ENCODE measurements at regions of chr2 and their contacts with region 1.

Region 1: DNA sequence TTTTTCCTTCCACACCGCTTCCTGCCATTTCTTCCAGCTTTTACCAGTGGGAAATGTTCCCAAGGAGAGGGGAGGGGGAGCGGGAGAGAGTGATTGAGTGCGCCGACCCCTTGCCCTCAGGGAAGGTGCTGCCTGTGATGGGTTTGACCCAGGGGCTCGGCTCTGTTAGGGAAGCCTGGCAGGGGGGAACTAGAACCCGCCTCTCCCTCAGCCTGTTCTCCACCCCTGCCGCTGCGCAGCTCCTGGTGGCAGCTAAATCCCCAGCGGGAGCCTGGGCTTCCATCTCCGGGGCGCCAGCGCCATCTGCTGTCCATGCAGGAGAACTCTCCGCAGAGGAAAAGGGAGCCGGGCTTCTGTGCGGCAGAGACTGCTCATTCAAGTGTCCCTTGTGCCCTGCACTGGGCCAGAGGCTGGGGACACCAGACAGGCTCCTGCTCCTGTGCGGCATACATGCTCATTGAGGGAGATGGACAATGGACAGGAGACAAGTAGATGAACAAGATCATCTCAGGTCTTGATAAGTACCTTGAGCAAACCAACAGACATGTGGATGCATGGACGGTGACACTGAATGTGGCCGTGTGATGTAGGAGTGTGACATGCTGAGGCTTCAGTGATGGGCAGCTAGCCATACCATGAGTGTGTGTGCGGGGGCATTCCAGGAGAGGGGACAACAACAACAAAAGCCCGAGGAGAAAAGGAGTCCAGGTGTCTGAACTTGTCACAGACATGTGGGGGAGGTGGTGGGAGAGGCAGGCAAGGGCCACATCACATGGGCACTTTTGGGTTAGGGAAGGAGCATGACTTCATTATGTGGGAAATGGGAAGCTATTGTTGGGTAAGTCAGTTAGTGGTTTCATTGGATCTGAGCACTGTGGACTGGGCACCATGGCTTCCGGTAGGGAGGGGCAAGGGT is 13.3 kb downstream of the CHPF start:
- DNase-seq: peak; percentile 53 to 90 (median 78)
- ATAC-seq: peak; percentile 84 to 97 (median 88)
- H3K4me3 ChIP-seq: no peak overlapping the region
- H3K4me3 Mint-ChIP-seq: no peak overlapping the region
- H3K27ac ChIP-seq: no peak overlapping the region
- H3K27ac Mint-ChIP-seq: no peak overlapping the region
- H3K4me1 ChIP-seq: peaks cover 0 to 6% of the 10 kb centered on the region in 2 experiments
- H3K4me1 Mint-ChIP-seq: no peaks in the 10 kb centered on the region
- H3K27me3 ChIP-seq: peaks cover 0 to 85% of the 10 kb centered on the region in 2 experiments
- H3K27me3 Mint-ChIP-seq: peaks cover 62 to 73% of the 10 kb centered on the region in 2 donors

Region 2: GRCh38 chr2:219073413-219074129 is 456.7 kb before region 1 on chr2:
- CTCF ChIA-PET with region 1: no interaction called
- POLR2A ChIA-PET with region 1: no interaction called
- DNase-seq: peak in 1 of 35 experiments; percentile 36
- ATAC-seq: no peak
- H3K4me3 ChIP-seq: no peak overlapping the region
- H3K4me3 Mint-ChIP-seq: no peak overlapping the region
- H3K27ac ChIP-seq: no peak overlapping the region
- H3K27ac Mint-ChIP-seq: no peak overlapping the region
- H3K4me1 ChIP-seq: no peaks in the 10 kb centered on the region
- H3K4me1 Mint-ChIP-seq: no peaks in the 10 kb centered on the region
- H3K27me3 ChIP-seq: no peaks in the 10 kb centered on the region
- H3K27me3 Mint-ChIP-seq: no peaks in the 10 kb centered on the region

Region 3: GRCh38 chr2:219402665-219403515 is 127.4 kb before region 1 on chr2:
- CTCF ChIA-PET with region 1: interaction called, 27 to 57 read pairs
- POLR2A ChIA-PET with region 1: interaction called in 1 of 2 experiments, 4 read pairs
- DNase-seq: peak; percentile 15 to 77 (median 47)
- ATAC-seq: peak; percentile 86 to 90 (median 88)
- H3K4me3 ChIP-seq: no peak overlapping the region
- H3K4me3 Mint-ChIP-seq: no peak overlapping the region
- H3K27ac ChIP-seq: no peak overlapping the region
- H3K27ac Mint-ChIP-seq: no peak overlapping the region
- H3K4me1 ChIP-seq: peaks cover 0 to 7% of the 10 kb centered on the region in 2 experiments
- H3K4me1 Mint-ChIP-seq: peaks cover 0 to 5% (median 5%) of the 10 kb centered on the region in 3 donors
- H3K27me3 ChIP-seq: peaks cover 0 to 37% of the 10 kb centered on the region in 2 experiments
- H3K27me3 Mint-ChIP-seq: peaks cover 0 to 9% of the 10 kb centered on the region in 2 donors

Region 4: DNA sequence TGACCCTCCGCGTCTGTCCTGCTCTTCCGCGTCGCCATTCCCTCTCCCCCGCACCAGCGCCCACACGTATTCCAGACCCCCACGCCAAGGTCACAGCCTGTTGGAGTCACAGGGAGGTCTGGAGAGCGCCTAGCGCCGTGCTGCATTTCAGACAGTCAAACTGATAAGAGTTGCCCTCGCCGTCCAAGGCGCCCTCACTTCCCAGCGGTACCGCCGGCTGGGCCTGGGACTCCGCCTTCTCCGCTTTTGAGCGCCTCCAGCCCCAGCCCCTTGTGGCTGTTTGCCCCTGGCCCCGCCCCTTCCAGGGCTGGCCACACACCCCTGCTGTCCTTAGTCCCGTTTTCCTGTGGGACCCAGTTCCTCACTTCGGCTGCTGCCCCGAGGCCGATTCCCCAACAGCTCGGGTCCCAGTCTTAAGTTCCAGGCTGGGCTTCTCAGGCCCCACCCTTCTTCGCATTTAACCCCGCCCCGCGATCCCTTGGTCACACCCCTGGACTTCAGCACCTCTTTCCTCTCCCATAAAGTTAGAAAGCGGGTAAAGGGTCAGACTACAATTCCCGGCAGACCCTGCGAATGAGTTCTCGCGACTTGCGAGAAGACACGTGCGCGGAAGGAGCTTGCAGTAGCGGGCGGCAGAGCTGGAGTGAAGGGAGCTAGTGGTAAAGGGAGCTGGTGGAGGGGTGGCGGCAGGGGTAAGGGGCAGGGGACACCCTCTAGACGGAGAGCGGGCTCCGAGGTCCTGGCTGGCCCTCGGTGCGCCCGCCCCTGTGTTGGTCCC is 31.8 kb before region 1 on chr2 and contains the start of gene GMPPA:
- CTCF ChIA-PET with region 1: interaction called, 13 to 29 read pairs
- POLR2A ChIA-PET with region 1: no interaction called
- DNase-seq: peak; percentile 81 to 94 (median 89)
- ATAC-seq: peak; percentile 92 to 95 (median 94)
- H3K4me3 ChIP-seq: peak within 1 kb of the TSS; percentile 72 to 78
- H3K4me3 Mint-ChIP-seq: peak within 1 kb of the TSS; percentile 90 to 96 (median 93)
- H3K27ac ChIP-seq: peak within 1 kb of the TSS; percentile 39
- H3K27ac Mint-ChIP-seq: peak within 1 kb of the TSS; percentile 80 to 83
- H3K4me1 ChIP-seq: peaks cover 2 to 48% of the 10 kb centered on the region in 2 experiments
- H3K4me1 Mint-ChIP-seq: peaks cover 32 to 40% (median 35%) of the 10 kb centered on the region in 3 donors
- H3K27me3 ChIP-seq: peaks cover 3 to 51% of the 10 kb centered on the region in 2 experiments
- H3K27me3 Mint-ChIP-seq: peaks cover 34 to 46% of the 10 kb centered on the region in 2 donors
- total RNA-seq, gene GMPPA: 20.6 to 47.7 (median 41.3) TPM

Region 5: GRCh38 chr2:219541611-219542180 is 11.4 kb after region 1 on chr2:
- CTCF ChIA-PET with region 1: interaction called, 5 to 11 read pairs
- POLR2A ChIA-PET with region 1: no interaction called
- DNase-seq: peak; percentile 65 to 92 (median 80)
- ATAC-seq: peak; percentile 37 to 45 (median 40)
- H3K4me3 ChIP-seq: peak overlapping the region; percentile 57 to 71
- H3K4me3 Mint-ChIP-seq: peak overlapping the region; percentile 78 to 89 (median 84)
- H3K27ac ChIP-seq: no peak overlapping the region
- H3K27ac Mint-ChIP-seq: no peak overlapping the region
- H3K4me1 ChIP-seq: peaks cover 10 to 33% of the 10 kb centered on the region in 2 experiments
- H3K4me1 Mint-ChIP-seq: peaks cover 24 to 28% (median 27%) of the 10 kb centered on the region in 3 donors
- H3K27me3 ChIP-seq: peaks cover 4 to 14% of the 10 kb centered on the region in 2 experiments
- H3K27me3 Mint-ChIP-seq: peaks cover 0 to 4% of the 10 kb centered on the region in 2 donors

Region 6: GRCh38 chr2:219772095-219772635 is 241.9 kb after region 1 on chr2:
- CTCF ChIA-PET with region 1: no interaction called
- POLR2A ChIA-PET with region 1: no interaction called
- DNase-seq: no peak
- ATAC-seq: no peak
- H3K4me3 ChIP-seq: no peak overlapping the region
- H3K4me3 Mint-ChIP-seq: no peak overlapping the region
- H3K27ac ChIP-seq: no peak overlapping the region
- H3K27ac Mint-ChIP-seq: no peak overlapping the region
- H3K4me1 ChIP-seq: no peaks in the 10 kb centered on the region
- H3K4me1 Mint-ChIP-seq: no peaks in the 10 kb centered on the region
- H3K27me3 ChIP-seq: peaks cover 0 to 13% of the 10 kb centered on the region in 2 experiments
- H3K27me3 Mint-ChIP-seq: peaks cover 3 to 20% of the 10 kb centered on the region in 2 donors

Measured in T-cell (primary cell).